ENCODE measurements at regions of chr2 and their contacts with region 1.

Region 1: DNA sequence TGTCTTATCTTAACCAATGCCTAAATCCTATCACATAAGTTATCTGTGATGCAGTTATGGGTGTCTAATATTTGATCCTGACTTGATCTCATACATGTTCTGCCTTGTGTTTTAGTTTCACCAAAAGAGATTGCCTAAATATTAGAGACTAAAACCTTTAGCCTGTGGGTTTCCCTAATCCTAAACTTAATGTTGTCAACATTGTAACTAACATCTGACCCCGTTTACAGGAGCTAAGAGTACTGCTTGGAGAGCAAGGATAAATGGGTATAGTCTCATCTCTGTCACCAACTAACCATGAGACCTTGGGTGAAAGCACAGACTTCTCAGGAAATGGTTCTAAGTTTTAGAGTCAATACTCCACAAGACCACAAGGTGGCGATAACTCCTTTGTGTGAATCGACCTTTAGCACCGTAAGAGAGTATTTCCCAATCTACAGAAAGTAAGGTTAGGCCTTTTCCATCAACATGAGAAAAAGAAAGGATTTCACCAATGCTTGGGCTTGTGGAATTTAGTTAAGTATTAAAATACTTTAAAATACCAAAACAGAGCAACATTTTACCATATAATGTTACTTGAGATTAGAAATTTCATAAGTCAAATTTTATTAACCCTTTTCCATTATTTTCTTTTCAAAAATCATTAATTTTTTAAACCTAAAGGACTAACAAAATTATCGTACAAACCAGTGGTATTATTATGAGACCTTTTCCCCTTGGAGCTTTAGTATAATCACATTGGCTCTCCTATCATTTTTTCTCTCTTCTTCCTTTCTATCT is 60.5 kb downstream of the G6PC2 start:
- DNase-seq: no peak
- H3K4me3 Mint-ChIP-seq: no peak overlapping the region
- H3K27ac Mint-ChIP-seq: no peak overlapping the region
- H3K4me1 Mint-ChIP-seq: peaks cover 33% of the 10 kb centered on the region
- H3K27me3 Mint-ChIP-seq: peaks cover 10% of the 10 kb centered on the region

Region 2: DNA sequence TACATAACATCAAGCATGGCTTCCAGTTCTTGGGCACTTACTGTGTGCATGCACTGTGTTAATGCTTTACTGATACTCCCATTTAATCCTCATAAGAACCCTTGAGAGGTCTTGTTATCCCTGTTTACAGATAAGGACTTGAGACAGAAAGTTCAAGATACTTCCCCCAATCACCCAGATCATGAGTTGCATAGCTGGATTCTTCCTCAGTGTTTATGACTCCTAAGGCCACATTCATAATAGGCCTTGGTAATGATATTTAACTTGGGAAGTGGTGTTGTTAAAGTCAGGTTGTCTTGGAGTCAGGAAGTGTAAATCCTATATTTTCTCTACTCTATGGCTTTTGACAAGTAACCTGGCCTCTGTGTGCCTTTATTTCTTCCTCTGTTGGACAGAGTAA is 136.5 kb before region 1 on chr2:
- intact Hi-C with region 1: no loop called
- DNase-seq: no peak
- H3K4me3 Mint-ChIP-seq: no peak overlapping the region
- H3K27ac Mint-ChIP-seq: no peak overlapping the region
- H3K4me1 Mint-ChIP-seq: no peaks in the 10 kb centered on the region
- H3K27me3 Mint-ChIP-seq: peaks cover 2% of the 10 kb centered on the region

Region 3: DNA sequence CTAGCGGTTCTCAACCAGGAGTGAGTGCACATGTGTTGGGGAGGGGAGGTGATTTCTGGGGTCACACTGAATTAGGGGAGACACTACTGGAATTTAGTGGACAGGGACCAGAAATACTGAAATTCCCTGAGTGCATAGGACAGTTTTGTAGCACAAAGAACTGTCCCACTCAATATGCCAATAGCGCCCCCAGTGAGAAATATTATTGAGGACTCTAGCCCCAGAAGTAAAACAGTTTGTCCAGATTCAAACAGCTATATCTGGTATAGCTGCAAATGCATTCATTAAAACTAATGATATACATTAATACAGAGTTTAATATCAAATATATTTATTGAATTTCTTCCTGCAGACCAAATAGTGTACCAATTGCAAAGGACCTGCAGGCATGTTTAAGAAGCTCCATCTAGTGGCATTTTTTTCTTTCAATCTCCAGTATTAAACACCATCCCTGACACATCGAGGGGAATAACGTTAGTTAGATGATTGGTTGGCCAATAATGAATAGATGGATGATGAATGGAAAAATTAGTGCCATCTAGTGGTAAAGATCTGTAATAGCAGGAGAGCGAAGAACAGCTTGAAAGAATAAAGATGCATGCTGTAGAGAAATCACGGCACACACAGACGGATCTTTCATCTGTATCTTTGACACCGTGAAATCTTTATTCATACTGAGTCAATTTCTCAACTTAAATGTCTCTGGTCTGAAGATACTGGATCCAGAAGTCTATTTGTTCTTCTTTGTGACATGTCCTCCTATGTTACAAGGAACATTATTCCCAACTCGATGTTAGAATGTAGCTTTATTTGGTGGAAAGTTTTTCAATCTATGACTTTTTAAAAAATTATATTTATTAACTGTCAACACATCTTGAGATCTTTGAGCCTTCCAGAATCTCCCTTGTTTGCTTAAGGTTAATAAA is 170.2 kb after region 1 on chr2:
- intact Hi-C with region 1: loop called (anchors 1 kb)
- DNase-seq: no peak
- H3K4me3 Mint-ChIP-seq: no peak overlapping the region
- H3K27ac Mint-ChIP-seq: no peak overlapping the region
- H3K4me1 Mint-ChIP-seq: peaks cover 7% of the 10 kb centered on the region
- H3K27me3 Mint-ChIP-seq: peaks cover 5% of the 10 kb centered on the region

Region 4: DNA sequence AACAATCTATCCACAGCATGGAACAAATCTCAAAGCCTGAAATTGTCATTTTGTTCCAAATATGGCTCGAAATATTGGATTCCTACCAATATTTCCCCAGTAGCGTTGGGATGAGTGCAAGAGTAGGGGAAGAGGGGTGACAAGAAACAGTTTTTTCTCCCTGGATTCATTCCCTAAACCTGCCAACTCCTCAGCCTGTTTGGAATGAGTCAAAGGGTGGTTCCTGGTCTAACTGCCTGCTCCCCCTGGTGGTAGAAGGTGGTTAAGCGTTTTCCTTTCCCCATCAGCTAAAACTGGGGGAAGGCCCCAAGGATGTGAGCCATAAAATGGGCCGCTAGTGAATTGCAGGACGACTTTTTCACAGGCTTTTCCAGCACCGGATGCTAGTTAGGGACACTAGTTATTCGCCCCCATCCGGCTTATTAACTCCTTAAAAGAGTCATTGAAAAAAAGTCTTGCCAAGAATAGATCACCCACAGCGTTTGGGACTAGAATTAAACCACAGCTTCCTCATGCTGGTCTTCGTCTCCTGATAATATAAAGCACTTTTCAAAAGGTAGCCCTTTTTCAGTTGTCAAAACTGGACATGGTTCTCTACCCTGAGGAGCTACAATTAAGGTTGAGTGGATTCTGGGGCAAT is 180.2 kb after region 1 on chr2:
- intact Hi-C with region 1: loop called (anchors 1 kb)
- DNase-seq: peak; percentile 26
- H3K4me3 Mint-ChIP-seq: no peak overlapping the region
- H3K27ac Mint-ChIP-seq: no peak overlapping the region
- H3K4me1 Mint-ChIP-seq: no peaks in the 10 kb centered on the region
- H3K27me3 Mint-ChIP-seq: peaks cover 4% of the 10 kb centered on the region

Measured in activated T-helper 2 cell treated with anti-CD3 and anti-CD28 coated beads, Interferon-gamma antibody, Interleukin-2, Interleukin-4, amounts not matched to agents 10 μg/mL and 5 μg/mL and 100 μg/mL, durations not matched to agents 14 hours and 24 hours and 36 hours (primary cell).